ENCODE measurements at regions of chr1 and their contacts with region 1.

Region 1: GRCh38 chr1:17661546-17662157 is 93.5 kb upstream of the ACTL8 start:
- DNase-seq: peak; percentile 63 to 89 (median 79)
- H3K4me3 ChIP-seq: no peak overlapping the region
- H3K27ac ChIP-seq: peak overlapping the region in 1 of 59 donors; percentile 33
- H3K27me3 ChIP-seq: no peaks in the 10 kb centered on the region
- CTCF ChIP-seq: peak; percentile 72 to 95 (median 90)

Region 2: GRCh38 chr1:17502326-17502778 is 159.3 kb before region 1 on chr1:
- intact Hi-C with region 1: loop called in 1 of 2 experiments (anchors 5 kb)
- DNase-seq: peak; percentile 70 to 90 (median 82)
- H3K4me3 ChIP-seq: peak overlapping the region in 1 of 59 donors; percentile 15
- H3K27ac ChIP-seq: peak overlapping the region in 5 of 59 donors; percentile 23 to 43 (median 28)
- H3K27me3 ChIP-seq: no peaks in the 10 kb centered on the region
- CTCF ChIP-seq: peak; percentile 64 to 98 (median 93)

Region 3: GRCh38 chr1:17826165-17826488 is 164.5 kb after region 1 on chr1:
- intact Hi-C with region 1: loop called (anchors 5 kb)
- DNase-seq: peak in 5 of 10 donors; percentile 16 to 51 (median 39)
- H3K4me3 ChIP-seq: no peak overlapping the region
- H3K27ac ChIP-seq: no peak overlapping the region
- H3K27me3 ChIP-seq: peaks cover 0 to 37% (median 3%) of the 10 kb centered on the region in 45 donors
- CTCF ChIP-seq: peak in 54 of 56 donors; percentile 21 to 70 (median 50)

Region 4: DNA sequence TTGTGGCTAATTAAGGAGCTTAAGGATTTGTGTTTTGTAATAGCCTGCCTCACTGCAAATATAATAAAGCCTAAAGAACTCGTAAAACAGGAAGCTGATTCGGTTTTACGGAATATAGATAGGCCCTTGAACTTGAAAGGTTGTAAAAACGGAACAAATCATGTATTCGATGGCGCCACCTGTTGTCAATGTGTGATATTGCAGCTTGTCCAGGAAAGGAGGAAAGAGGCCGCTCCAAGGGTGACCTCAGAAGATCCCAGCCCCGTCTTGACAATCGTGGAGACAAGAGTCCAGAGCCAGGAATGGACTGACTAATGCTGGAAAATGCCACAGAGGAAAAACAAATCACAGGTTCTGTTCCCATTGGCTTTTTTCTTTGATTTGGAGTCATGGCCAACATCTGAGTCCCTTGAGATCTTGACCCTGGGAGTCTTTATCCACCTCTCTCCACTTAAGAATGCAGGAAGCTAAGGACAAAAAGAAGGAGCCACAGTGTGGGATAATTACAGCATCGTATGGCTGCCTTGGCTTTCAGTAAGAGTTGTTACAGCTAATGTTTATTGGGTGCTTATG is 438.9 kb after region 1 on chr1:
- intact Hi-C with region 1: loop called in 1 of 2 experiments (anchors 5 kb)
- DNase-seq: peak in 8 of 10 donors; percentile 30 to 84 (median 69)
- H3K4me3 ChIP-seq: no peak overlapping the region
- H3K27ac ChIP-seq: no peak overlapping the region
- H3K27me3 ChIP-seq: peaks cover 0 to 4% (median 0%) of the 10 kb centered on the region in 45 donors
- CTCF ChIP-seq: peak; percentile 61 to 92 (median 85)

Region 5: DNA sequence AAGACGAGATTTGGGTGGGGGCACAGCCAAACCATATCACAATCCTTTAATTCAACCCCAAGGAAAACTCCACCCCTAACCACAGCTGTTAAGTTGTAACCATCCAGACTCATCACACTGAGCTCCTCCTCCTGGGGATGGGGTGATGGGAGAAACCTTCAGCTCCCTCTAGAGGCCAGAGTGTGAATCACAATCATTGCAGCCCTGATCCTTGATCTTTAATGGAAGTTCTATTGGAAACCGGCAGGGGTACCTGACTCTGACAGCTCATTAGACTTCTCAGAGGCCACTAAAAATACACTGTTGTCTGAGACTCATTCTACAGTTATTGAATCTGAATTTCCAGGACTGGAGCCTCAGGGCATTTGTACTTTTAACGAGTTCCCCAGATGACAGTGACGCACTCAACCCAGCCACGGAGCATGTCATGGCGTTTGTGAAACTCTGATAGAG is 573.2 kb after region 1 on chr1:
- intact Hi-C with region 1: loop called in 1 of 2 experiments (anchors 10 kb)
- DNase-seq: peak in 5 of 10 donors; percentile 39 to 64 (median 43)
- H3K4me3 ChIP-seq: no peak overlapping the region
- H3K27ac ChIP-seq: no peak overlapping the region
- H3K27me3 ChIP-seq: no peaks in the 10 kb centered on the region
- CTCF ChIP-seq: peak; percentile 48 to 90 (median 77)

Region 6: DNA sequence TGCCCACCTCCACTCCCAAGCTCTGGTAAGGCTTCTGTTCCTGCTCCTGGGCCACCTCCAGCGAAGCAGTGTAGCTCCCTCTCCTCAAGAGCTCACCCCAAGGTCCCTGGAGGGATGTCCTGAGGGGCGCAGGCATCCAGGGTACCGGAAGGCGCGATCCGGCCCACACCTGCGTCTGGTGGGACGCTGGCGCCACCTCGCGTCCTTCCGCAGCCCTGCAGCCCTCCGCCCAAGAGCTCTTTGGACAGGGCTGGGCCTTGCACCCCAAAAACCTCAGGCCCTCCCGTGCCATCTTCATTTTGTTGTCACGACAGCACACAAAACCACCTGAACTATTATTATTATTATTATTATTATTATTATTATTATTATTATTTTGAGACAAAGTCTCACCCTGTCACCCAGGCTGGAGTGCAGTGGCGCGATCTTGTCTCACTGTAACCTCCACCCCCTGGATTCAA is 919.8 kb after region 1 on chr1:
- intact Hi-C with region 1: loop called (anchors 5 to 10 kb)
- DNase-seq: peak in 7 of 10 donors; percentile 30 to 74 (median 44)
- H3K4me3 ChIP-seq: no peak overlapping the region
- H3K27ac ChIP-seq: peak overlapping the region in 1 of 59 donors; percentile 45
- H3K27me3 ChIP-seq: peaks cover 0 to 8% (median 0%) of the 10 kb centered on the region in 45 donors
- CTCF ChIP-seq: peak; percentile 28 to 83 (median 70)

Measured in dorsolateral prefrontal cortex (tissue), 120 donors.